ENCODE measurements at regions of chr6 and their contacts with region 1.

Region 1: GRCh38 chr6:42269974-42270510 is 52.4 kb upstream of the MRPS10 start:
- DNase-seq: no peak

Region 2: GRCh38 chr6:42352856-42353564 is 83.0 kb after region 1 on chr6:
- intact Hi-C with region 1: no loop called
- DNase-seq: no peak

Region 3: DNA sequence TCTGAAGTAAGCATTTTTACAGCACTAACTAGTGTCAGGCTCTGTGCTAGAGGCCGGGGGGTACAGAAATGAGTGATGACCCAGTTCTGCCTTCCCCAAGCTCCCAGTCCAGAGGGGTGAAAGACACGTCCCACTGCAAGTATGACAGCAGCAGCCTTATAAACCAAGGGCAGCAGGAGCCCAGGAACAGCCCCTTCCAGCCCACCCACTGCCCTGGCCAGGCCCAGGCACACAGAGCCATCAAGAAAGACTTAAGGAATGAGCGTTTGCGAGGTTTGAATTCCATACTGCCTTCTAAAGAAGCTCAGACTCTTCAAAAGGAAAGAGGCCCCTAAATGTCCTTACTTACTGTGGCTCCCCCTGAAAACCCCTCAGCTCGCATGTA is 171.6 kb after region 1 on chr6:
- intact Hi-C with region 1: loop called (anchors 2 kb)
- DNase-seq: no peak

Measured in cardiac septum (tissue), 1 donor.